HAP-1 (cell line): ENCODE measurements at regions of chr17 and their contacts with region 1.

Region 1: GRCh38 chr17:34199932-34200534 is 55.1 kb upstream of the CCL2 start:
- DNase-seq: peak; percentile 75 to 82
- H3K4me3 ChIP-seq: no peak overlapping the region
- H3K4me1 ChIP-seq: no peaks in the 10 kb centered on the region
- H3K27me3 ChIP-seq: peaks cover 11% of the 10 kb centered on the region; the same call in 1 of the 2 replicates

Region 2: GRCh38 chr17:34156741-34157589 is 43.1 kb before region 1 on chr17:
- in situ Hi-C with region 1: no loop called
- DNase-seq: no peak
- H3K4me3 ChIP-seq: no peak overlapping the region
- H3K4me1 ChIP-seq: no peaks in the 10 kb centered on the region
- H3K27me3 ChIP-seq: no peaks in the 10 kb centered on the region

Region 3: GRCh38 chr17:34318474-34318873 is 118.4 kb after region 1 on chr17:
- in situ Hi-C with region 1: no loop called
- DNase-seq: peak in 1 of 2 experiments; percentile 55
- H3K4me3 ChIP-seq: no peak overlapping the region
- H3K4me1 ChIP-seq: no peaks in the 10 kb centered on the region
- H3K27me3 ChIP-seq: 0 out of 2 replicates have a peak, but pooled peaks cover 8% of the 10 kb centered on the region

Region 4: GRCh38 chr17:34361478-34362061 is 161.5 kb after region 1 on chr17:
- in situ Hi-C with region 1: loop called (anchors 5 kb)
- DNase-seq: peak; percentile 65 to 90
- H3K4me3 ChIP-seq: no peak overlapping the region
- H3K4me1 ChIP-seq: no peaks in the 10 kb centered on the region
- H3K27me3 ChIP-seq: no peaks in the 10 kb centered on the region

Region 5: GRCh38 chr17:34797720-34798119 is 597.7 kb after region 1 on chr17:
- in situ Hi-C with region 1: no loop called
- DNase-seq: peak; percentile 43 to 67
- H3K4me3 ChIP-seq: no peak overlapping the region
- H3K4me1 ChIP-seq: no peaks in the 10 kb centered on the region
- H3K27me3 ChIP-seq: no peaks in the 10 kb centered on the region